ENCODE measurements at regions of chr18 and their contacts with region 1.

Region 1: GRCh38 chr18:49844903-49845302 is 31.6 kb upstream of the ACAA2 start:
- DNase-seq: no peak
- H3K4me3 ChIP-seq: no peak overlapping the region
- H3K27ac ChIP-seq: no peak overlapping the region
- H3K4me1 ChIP-seq: no peaks in the 10 kb centered on the region
- H3K27me3 ChIP-seq: no peaks in the 10 kb centered on the region
- CTCF ChIP-seq: no peak

Region 2: GRCh38 chr18:49588171-49588570 is 256.7 kb before region 1 on chr18:
- CTCF ChIA-PET with region 1: no interaction called
- POLR2A ChIA-PET with region 1: interaction called, 15 read pairs
- intact Hi-C with region 1: no loop called
- DNase-seq: no peak
- H3K4me3 ChIP-seq: no peak overlapping the region
- H3K27ac ChIP-seq: no peak overlapping the region
- H3K4me1 ChIP-seq: no peaks in the 10 kb centered on the region
- H3K27me3 ChIP-seq: no peaks in the 10 kb centered on the region
- CTCF ChIP-seq: no peak

Region 3: GRCh38 chr18:50128506-50129271 is 283.8 kb after region 1 on chr18:
- CTCF ChIA-PET with region 1: no interaction called
- POLR2A ChIA-PET with region 1: no interaction called
- intact Hi-C with region 1: no loop called
- DNase-seq: no peak
- H3K4me3 ChIP-seq: no peak overlapping the region
- H3K27ac ChIP-seq: no peak overlapping the region
- H3K4me1 ChIP-seq: no peaks in the 10 kb centered on the region
- H3K27me3 ChIP-seq: peaks cover 7% of the 10 kb centered on the region
- CTCF ChIP-seq: no peak

Region 4: GRCh38 chr18:50492097-50492496 is 647.2 kb after region 1 on chr18:
- CTCF ChIA-PET with region 1: no interaction called
- POLR2A ChIA-PET with region 1: no interaction called
- intact Hi-C with region 1: no loop called
- DNase-seq: no peak
- H3K4me3 ChIP-seq: no peak overlapping the region
- H3K27ac ChIP-seq: no peak overlapping the region
- H3K4me1 ChIP-seq: no peaks in the 10 kb centered on the region
- H3K27me3 ChIP-seq: peaks cover 5% of the 10 kb centered on the region
- CTCF ChIP-seq: no peak